ENCODE measurements at regions of chr20 and their contacts with region 1.

Region 1: GRCh38 chr20:41232973-41233926 is 84.3 kb downstream of the ZHX3 start:
- DNase-seq: no peak
- ATAC-seq: no peak
- H3K4me3 Mint-ChIP-seq: no peak overlapping the region
- H3K27ac Mint-ChIP-seq: no peak overlapping the region
- H3K4me1 Mint-ChIP-seq: peaks cover 27% of the 10 kb centered on the region
- H3K27me3 Mint-ChIP-seq: no peaks in the 10 kb centered on the region

Region 2: DNA sequence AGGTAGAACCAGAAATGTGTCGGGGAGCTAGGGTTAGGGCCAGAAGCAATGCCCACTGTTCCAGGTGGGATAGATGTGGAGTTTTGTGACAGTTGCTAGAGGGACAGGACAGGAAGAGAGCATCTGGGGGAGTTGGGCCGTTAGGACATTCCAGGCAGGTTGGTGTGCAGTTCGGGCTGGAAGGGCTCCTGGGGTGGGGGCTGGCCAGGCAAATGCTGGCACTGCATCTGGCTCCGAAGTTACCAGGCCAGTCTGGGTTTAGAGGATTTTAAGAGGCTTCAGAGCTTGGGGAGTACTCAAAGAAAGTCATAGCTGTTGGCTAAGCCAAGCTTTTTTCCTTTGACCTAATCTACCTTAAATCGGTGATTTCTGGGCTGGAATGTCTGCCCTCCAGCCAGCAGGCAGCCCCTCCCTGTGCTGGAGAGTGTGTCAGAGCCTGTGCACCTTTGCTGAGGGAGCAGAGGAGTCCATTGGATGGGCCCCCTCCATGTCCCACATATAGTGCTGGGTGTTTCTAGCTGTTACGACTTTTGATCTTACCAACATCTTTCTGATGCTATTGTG is 75.1 kb before region 1 on chr20:
- CTCF ChIA-PET with region 1: interaction called, 12 read pairs
- DNase-seq: no peak
- ATAC-seq: no peak
- H3K4me3 Mint-ChIP-seq: peak overlapping the region; percentile 76
- H3K27ac Mint-ChIP-seq: peak overlapping the region; percentile 99
- H3K4me1 Mint-ChIP-seq: peaks cover 86% of the 10 kb centered on the region
- H3K27me3 Mint-ChIP-seq: no peaks in the 10 kb centered on the region

Region 3: DNA sequence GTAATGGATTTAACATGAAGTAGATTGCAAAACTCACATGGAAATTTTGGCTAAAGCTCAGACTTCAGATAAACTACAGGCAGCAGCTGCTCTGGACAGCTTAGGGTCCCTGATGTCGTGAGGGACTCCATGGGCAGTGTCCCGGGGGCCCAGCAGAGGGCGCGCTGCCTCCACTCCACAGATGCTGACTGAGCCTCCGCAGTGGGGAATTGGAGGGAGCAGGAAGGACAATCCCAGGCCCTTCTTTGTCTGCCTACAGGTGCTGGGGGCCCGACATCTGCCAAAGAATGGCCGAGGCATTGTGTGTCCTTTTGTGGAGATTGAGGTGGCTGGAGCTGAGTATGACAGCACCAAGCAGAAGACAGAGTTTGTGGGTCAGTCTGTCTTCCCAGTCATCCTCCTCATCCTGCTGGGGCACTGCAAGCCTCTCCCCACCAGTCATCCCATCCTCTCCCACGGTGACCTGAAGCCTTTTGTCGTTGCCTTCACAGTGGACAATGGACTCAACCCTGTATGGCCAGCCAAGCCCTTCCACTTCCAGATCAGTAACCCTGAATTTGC is 60.0 kb before region 1 on chr20:
- CTCF ChIA-PET with region 1: interaction called, 30 read pairs
- DNase-seq: peak; percentile 63
- ATAC-seq: peak; percentile 81
- H3K4me3 Mint-ChIP-seq: no peak overlapping the region
- H3K27ac Mint-ChIP-seq: no peak overlapping the region
- H3K4me1 Mint-ChIP-seq: peaks cover 15% of the 10 kb centered on the region
- H3K27me3 Mint-ChIP-seq: no peaks in the 10 kb centered on the region

Region 4: DNA sequence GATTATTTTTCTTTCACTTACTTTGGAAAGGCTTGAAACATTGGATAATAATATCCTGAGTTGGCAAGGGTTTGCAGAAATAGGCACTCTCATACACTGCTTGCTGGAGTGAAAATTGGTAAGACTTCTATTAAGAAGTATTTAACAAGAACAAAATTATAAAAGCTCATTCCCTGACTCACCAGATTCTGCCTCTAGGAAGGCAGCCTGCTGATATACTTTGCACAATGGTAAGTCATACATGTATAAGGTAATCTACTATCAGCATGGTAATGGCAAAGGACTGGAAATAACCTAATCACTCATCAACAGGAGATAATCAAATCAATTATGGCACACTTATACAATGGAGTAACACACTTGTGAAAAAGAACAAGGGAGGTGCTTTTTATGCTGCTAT is 10.1 kb before region 1 on chr20:
- CTCF ChIA-PET with region 1: interaction called, 10 read pairs
- DNase-seq: no peak
- ATAC-seq: no peak
- H3K4me3 Mint-ChIP-seq: no peak overlapping the region
- H3K27ac Mint-ChIP-seq: no peak overlapping the region
- H3K4me1 Mint-ChIP-seq: no peaks in the 10 kb centered on the region
- H3K27me3 Mint-ChIP-seq: no peaks in the 10 kb centered on the region

Region 5: DNA sequence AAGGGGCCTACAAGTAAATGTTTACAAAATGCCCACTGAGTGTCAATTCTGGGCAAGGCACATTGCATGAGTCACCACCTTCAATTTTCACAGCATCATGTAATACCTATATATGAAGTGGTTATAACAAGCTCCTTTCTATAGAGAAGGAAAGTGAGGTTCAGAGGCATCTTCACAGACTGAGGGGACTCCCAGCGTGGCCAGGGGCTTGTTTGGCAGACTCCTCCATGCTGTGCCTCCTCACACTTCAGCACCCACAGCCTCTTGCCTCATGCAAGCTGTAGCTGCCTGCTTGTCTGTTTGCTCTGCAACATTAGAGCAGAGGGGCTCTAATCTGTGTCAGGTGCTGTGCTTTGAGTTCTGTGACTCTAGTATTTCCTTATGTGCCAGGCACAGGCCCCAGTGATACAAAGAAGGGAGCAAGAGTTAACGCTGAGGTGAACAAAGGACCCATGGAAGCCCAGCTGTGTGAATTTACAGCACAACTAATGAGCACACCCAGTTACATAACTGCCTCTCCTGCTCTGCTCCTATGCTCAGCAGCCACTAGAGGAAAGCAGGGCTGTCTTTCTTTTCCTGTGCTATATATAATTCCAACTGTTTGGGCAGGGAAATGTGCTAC is 11.9 kb after region 1 on chr20:
- CTCF ChIA-PET with region 1: interaction called, 25 read pairs
- DNase-seq: no peak
- ATAC-seq: no peak
- H3K4me3 Mint-ChIP-seq: no peak overlapping the region
- H3K27ac Mint-ChIP-seq: no peak overlapping the region
- H3K4me1 Mint-ChIP-seq: peaks cover 45% of the 10 kb centered on the region
- H3K27me3 Mint-ChIP-seq: no peaks in the 10 kb centered on the region

Region 6: GRCh38 chr20:41339507-41340326 is 106.5 kb after region 1 on chr20:
- CTCF ChIA-PET with region 1: interaction called, 20 read pairs
- DNase-seq: peak; percentile 86
- ATAC-seq: peak; percentile 93
- H3K4me3 Mint-ChIP-seq: peak overlapping the region; percentile 70
- H3K27ac Mint-ChIP-seq: peak overlapping the region; percentile 54
- H3K4me1 Mint-ChIP-seq: peaks cover 11% of the 10 kb centered on the region
- H3K27me3 Mint-ChIP-seq: peaks cover 11% of the 10 kb centered on the region

Region 7: GRCh38 chr20:41604010-41604409 is 370.8 kb after region 1 on chr20:
- CTCF ChIA-PET with region 1: no interaction called
- DNase-seq: no peak
- ATAC-seq: no peak
- H3K4me3 Mint-ChIP-seq: no peak overlapping the region
- H3K27ac Mint-ChIP-seq: no peak overlapping the region
- H3K4me1 Mint-ChIP-seq: peaks cover 12% of the 10 kb centered on the region
- H3K27me3 Mint-ChIP-seq: no peaks in the 10 kb centered on the region